ENCODE measurements at regions of chr15 and their contacts with region 1.

Region 1: DNA sequence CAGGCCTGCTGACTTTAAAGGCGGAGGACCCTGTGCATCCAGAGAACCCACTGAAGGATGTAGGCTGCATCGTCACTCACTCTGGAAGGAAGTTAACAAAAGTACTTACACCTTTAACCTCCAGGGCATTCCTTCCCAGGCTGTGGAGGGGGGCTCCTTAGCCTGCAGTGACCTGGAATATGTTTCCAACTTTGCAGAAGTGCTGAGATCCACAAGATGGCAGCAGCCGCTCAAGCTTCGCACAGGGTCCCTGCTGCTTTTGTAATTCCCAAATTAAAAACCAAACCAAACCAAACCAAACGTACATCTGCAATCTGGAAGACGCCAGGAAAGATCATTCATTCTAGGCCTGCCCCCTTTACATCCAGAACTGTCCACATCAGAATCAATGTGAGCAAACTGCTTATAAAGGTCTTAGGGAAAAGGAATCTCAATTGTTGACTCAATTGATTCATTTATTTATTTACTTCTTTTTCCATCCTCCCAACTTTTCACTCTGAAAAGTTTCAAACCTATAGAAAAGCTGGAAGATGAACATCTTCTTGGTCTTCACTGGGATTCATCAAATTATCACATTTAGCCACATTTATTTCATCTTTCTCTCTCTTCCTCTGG is 70.5 kb upstream of the KLHL25 start:
- DNase-seq: peak; percentile 29
- H3K4me3 Mint-ChIP-seq: no peak overlapping the region
- H3K27ac Mint-ChIP-seq: no peak overlapping the region
- H3K4me1 Mint-ChIP-seq: peaks cover 2% of the 10 kb centered on the region
- H3K27me3 Mint-ChIP-seq: no peaks in the 10 kb centered on the region

Region 2: DNA sequence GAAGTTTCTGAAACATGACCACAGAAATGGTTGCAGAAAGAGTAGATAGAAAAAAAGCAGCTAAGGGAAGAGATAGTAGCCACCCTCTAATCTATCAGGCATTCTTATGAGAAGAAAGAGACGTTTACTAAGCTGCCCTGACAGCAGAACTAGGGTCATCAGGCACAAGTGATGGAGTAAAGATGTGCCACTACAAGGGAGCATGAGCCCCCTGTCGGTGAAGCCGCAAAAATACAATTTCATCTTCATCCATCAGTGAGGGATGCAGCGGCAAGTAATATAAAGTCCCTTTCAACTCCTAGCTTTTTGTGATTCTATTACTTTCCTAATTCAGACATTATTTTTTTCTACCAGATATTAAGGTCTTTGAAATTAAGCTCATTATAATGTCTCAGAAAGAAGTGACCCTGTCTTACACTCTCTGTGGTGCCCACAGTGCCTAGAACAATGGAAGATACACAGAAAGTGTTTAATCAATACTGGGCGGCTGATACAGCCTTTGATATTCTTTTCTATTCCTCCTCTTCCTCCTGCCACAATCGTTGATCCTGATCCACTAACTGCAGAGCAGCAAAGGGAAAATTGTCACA is 1739.8 kb after region 1 on chr15:
- CTCF ChIA-PET with region 1: no interaction called
- POLR2A ChIA-PET with region 1: no interaction called
- intact Hi-C with region 1: loop called (anchors 10 kb)
- DNase-seq: peak; percentile 22
- H3K4me3 Mint-ChIP-seq: no peak overlapping the region
- H3K27ac Mint-ChIP-seq: no peak overlapping the region
- H3K4me1 Mint-ChIP-seq: no peaks in the 10 kb centered on the region
- H3K27me3 Mint-ChIP-seq: no peaks in the 10 kb centered on the region